PC-3 (cell line): ENCODE measurements at regions of chr6 and their contacts with region 1.

Region 1: DNA sequence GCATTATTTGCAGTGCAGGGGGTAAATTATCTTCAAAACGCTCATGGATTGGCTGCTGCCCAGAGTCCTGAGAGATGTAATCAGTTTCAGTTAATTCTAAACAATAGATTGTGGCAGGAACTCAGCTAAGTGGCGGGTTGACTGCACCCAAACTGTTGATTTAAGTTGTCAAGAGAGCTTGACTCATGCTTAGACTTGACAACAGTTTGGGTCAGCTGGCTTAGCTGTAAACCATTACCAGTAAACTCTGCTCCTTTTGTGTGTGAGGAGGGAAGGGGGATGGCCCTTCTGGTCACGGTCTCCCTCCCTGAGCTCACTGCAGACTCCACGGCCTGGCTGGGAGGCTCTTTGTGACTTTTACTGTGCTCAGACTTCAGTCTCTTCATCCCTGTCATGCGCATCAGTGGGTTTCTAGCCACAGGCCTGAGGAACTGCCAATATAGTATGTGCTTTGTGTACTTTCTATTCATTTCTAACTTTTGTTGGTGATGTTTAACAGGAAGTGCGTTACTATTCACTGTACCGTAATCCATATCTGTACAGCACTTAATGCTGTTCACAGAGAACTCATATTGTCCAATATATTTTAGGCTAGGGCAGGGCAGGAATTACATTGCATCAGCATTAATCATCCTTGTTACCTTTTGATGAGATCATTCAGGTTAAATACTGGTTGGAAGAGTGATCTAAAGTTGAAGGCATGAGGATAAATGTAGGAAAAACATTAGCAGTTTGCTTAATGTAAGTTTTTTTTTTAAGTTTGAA is 488.3 kb downstream of the CDKAL1 start:
- DNase-seq: peak; percentile 97
- ATAC-seq: peak; percentile 82
- H3K4me3 ChIP-seq: peak overlapping the region; percentile 44
- H3K27ac ChIP-seq: peak overlapping the region; percentile 94
- H3K4me1 ChIP-seq: peaks cover 63% of the 10 kb centered on the region
- H3K27me3 ChIP-seq: no peaks in the 10 kb centered on the region
- CTCF ChIP-seq: no peak

Region 2: DNA sequence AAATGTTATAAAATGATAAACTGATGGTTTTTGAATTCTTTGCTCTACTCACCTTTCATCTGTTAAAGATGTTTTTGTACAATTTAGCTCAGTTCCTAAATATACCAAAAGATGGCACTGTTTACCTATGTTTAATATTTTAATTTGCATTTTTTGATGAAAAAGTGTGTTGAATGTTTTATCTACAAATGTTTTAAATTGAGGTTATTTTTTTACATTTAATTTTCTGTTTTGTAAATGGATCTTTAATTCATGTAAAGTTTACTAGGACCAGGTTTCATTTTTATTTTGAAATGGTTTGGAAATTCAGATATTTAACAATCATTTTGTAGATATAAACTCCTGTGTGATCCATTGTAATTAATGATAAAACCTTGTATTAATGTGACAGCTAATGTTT is 458.3 kb before region 1 on chr6:
- CTCF ChIA-PET with region 1: no interaction called
- POLR2A ChIA-PET with region 1: no interaction called
- intact Hi-C with region 1: loop called (anchors 5 kb)
- DNase-seq: peak; percentile 67
- ATAC-seq: no peak
- H3K4me3 ChIP-seq: no peak overlapping the region
- H3K27ac ChIP-seq: no peak overlapping the region
- H3K4me1 ChIP-seq: peaks cover 5% of the 10 kb centered on the region
- H3K27me3 ChIP-seq: no peaks in the 10 kb centered on the region
- CTCF ChIP-seq: peak; percentile 78

Region 3: GRCh38 chr6:21003780-21004541 is 18.6 kb before region 1 on chr6:
- CTCF ChIA-PET with region 1: interaction called, 4 read pairs
- POLR2A ChIA-PET with region 1: interaction called, 5 read pairs
- intact Hi-C with region 1: loop called (anchors 1 kb)
- DNase-seq: peak; percentile 93
- ATAC-seq: peak; percentile 68
- H3K4me3 ChIP-seq: peak overlapping the region; percentile 34; the same call in 1 of the 2 replicates
- H3K27ac ChIP-seq: peak overlapping the region; percentile 79
- H3K4me1 ChIP-seq: peaks cover 49% of the 10 kb centered on the region
- H3K27me3 ChIP-seq: no peaks in the 10 kb centered on the region
- CTCF ChIP-seq: no peak

Region 4: DNA sequence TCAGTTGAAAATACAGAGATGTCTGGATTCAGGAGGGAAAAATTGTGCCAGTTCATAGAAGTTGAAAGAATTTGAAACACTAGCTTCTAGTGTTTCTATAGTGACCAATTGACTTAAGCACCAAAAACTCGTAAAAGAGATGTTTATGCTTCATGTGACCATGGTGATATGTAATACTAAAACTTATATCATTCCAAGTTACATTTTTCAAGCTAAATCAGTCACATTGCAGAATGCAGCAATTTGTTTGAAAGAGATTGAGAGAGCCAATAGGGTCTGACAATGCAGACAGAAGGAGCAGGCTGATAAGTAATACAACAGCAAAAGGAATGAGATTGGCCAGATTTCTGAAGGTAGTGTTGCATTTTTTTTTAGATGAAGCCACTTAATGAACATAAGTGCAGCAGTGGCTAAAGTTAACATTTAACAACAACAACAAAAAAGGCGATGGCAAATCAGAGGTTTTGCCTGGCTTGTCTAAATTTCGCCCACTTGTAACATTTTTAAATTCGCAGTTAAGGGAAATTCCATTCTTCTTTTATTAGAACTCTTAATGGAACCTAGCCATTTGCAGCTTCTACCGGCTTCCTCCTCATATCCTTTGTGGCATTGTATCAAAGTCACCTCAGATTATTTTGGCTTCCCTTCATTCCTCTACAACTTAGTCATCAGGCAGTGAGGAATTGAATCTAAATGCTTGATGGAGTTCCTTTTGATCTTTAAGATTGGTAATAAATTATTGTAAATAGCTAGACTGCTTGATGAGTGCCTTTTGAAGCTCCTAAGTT is 87.1 kb after region 1 on chr6:
- CTCF ChIA-PET with region 1: interaction called, 3 read pairs
- POLR2A ChIA-PET with region 1: interaction called, 3 read pairs
- intact Hi-C with region 1: loop called (anchors 1 kb)
- DNase-seq: peak; percentile 94
- ATAC-seq: peak; percentile 77
- H3K4me3 ChIP-seq: peak overlapping the region; percentile 46
- H3K27ac ChIP-seq: peak overlapping the region; percentile 96
- H3K4me1 ChIP-seq: peaks cover 45% of the 10 kb centered on the region
- H3K27me3 ChIP-seq: no peaks in the 10 kb centered on the region
- CTCF ChIP-seq: no peak

Region 5: GRCh38 chr6:21227486-21227885 is 205.0 kb after region 1 on chr6:
- CTCF ChIA-PET with region 1: no interaction called
- POLR2A ChIA-PET with region 1: no interaction called
- intact Hi-C with region 1: loop called (anchors 2 kb)
- DNase-seq: peak; percentile 93
- ATAC-seq: peak; percentile 98
- H3K4me3 ChIP-seq: peak overlapping the region; percentile 9; the same call in 1 of the 2 replicates
- H3K27ac ChIP-seq: peak overlapping the region; percentile 78
- H3K4me1 ChIP-seq: peaks cover 33% of the 10 kb centered on the region
- H3K27me3 ChIP-seq: no peaks in the 10 kb centered on the region
- CTCF ChIP-seq: 0 out of 2 replicates have a peak, but pooled peaks have one; percentile 13

Region 6: DNA sequence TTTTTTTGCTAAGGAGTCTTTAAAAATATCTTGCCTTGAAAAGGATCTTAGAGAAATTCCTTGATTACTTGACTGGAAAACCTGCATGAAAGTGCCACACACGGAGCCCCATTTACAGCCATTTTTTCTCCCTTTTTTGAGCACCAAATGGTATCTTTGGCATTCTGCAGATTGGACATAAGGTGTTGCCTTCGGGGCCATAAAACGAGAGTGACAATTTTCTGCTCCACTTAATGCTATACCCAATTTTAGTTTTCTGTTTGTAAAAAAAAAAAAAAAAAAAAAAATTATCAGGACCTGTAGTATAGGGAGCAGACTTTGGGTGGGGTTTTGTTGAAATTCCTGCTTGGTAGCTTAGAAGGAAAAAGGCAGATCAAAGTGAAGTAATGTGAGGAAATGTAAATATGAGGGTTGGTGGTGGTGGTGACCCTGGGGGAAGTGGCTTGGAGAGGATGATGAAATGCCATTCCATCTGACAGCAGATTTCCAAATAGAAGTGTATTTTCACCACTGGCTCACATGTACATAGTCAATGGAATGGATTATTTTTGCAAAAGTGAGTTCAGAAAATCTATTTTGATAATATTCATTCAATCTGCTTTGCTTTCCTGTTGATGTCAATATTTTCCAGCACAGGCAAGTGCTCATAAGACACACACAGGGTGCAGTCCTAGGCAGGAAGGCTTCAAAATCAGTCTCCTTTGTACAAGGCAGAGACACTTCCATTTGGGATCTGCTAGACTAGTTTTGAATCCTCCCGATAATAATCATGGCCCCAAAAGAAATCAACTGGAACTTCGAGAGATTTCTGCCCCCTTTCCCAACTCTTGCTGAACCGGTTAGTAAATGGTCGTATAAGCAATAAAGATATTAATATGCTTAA is 359.1 kb after region 1 on chr6:
- CTCF ChIA-PET with region 1: no interaction called
- POLR2A ChIA-PET with region 1: no interaction called
- intact Hi-C with region 1: loop called (anchors 10 kb)
- DNase-seq: peak; percentile 89
- ATAC-seq: peak; percentile 80
- H3K4me3 ChIP-seq: no peak overlapping the region
- H3K27ac ChIP-seq: peak overlapping the region; percentile 46
- H3K4me1 ChIP-seq: peaks cover 36% of the 10 kb centered on the region
- H3K27me3 ChIP-seq: no peaks in the 10 kb centered on the region
- CTCF ChIP-seq: no peak